ENCODE measurements at regions of chr12 and their contacts with region 1.

Region 1: GRCh38 chr12:51368640-51369517 is 22.3 kb downstream of the GALNT6 start:
- DNase-seq: peak; percentile 94 to 98 (median 96)
- H3K4me3 ChIP-seq: peak overlapping the region; percentile 45 to 55
- H3K4me3 Mint-ChIP-seq: peak overlapping the region; percentile 63 to 92 (median 81)
- H3K27ac ChIP-seq: peak overlapping the region; percentile 54
- H3K27ac Mint-ChIP-seq: peak overlapping the region; percentile 96 to 99 (median 98)
- H3K4me1 ChIP-seq: peaks cover 33% of the 10 kb centered on the region
- H3K4me1 Mint-ChIP-seq: peaks cover 32 to 51% (median 40%) of the 10 kb centered on the region in 4 donors
- H3K27me3 ChIP-seq: no peaks in the 10 kb centered on the region
- H3K27me3 Mint-ChIP-seq: no peaks in the 10 kb centered on the region

Region 2: DNA sequence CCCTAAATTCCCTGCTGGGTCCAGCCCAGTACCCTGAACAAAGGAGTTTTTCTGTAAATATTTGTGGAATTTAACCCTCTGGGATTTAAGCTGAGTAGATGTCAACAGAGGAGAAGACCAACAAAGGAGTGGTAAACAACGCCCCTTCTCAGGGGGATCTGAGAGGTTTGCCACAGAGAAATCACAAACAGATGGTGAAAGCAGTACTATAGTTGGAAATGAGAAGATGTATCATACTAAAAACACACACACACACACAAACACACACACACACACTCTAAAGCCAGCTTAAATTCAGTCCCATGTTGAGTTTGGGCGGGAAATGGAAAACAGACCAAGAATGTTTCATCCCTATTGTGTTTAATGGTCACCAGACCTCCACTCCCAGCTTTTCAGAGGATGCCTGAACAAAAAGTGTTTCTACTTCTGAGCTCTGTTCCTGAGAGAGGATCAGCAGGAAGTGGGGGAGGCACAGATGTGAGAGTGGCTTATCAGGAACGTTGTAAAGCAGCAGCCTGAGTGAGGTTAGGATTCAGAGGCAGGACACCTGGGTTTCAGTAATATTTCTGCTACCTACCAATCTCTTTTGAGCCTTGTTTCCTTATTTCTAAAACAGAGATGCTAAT is 48.1 kb before region 1 on chr12:
- CTCF ChIA-PET with region 1: interaction called, 3 read pairs
- POLR2A ChIA-PET with region 1: interaction called, 27 read pairs
- intact Hi-C with region 1: no loop called
- DNase-seq: peak in 1 of 5 donors; percentile 29
- H3K4me3 ChIP-seq: peak overlapping the region; percentile 61 to 73
- H3K4me3 Mint-ChIP-seq: peak overlapping the region; percentile 82 to 99 (median 96)
- H3K27ac ChIP-seq: peak overlapping the region; percentile 94
- H3K27ac Mint-ChIP-seq: peak overlapping the region; percentile 95 to 98 (median 98)
- H3K4me1 ChIP-seq: peaks cover 78% of the 10 kb centered on the region
- H3K4me1 Mint-ChIP-seq: peaks cover 53 to 93% (median 72%) of the 10 kb centered on the region in 4 donors
- H3K27me3 ChIP-seq: no peaks in the 10 kb centered on the region
- H3K27me3 Mint-ChIP-seq: no peaks in the 10 kb centered on the region

Region 3: GRCh38 chr12:51326762-51327439 is 42.0 kb before region 1 on chr12:
- CTCF ChIA-PET with region 1: no interaction called
- POLR2A ChIA-PET with region 1: interaction called, 27 read pairs
- intact Hi-C with region 1: no loop called
- DNase-seq: no peak
- H3K4me3 ChIP-seq: no peak overlapping the region
- H3K4me3 Mint-ChIP-seq: peak overlapping the region in 7 of 8 donors; percentile 40 to 74 (median 64)
- H3K27ac ChIP-seq: peak overlapping the region; percentile 27
- H3K27ac Mint-ChIP-seq: peak overlapping the region; percentile 77 to 98 (median 94)
- H3K4me1 ChIP-seq: peaks cover 65% of the 10 kb centered on the region
- H3K4me1 Mint-ChIP-seq: peaks cover 51 to 91% (median 71%) of the 10 kb centered on the region in 4 donors
- H3K27me3 ChIP-seq: no peaks in the 10 kb centered on the region
- H3K27me3 Mint-ChIP-seq: no peaks in the 10 kb centered on the region

Region 4: GRCh38 chr12:51351913-51352532 is 16.9 kb before region 1 on chr12:
- CTCF ChIA-PET with region 1: interaction called, 11 read pairs
- POLR2A ChIA-PET with region 1: interaction called, 6 read pairs
- intact Hi-C with region 1: loop called (anchors 2 kb)
- DNase-seq: peak; percentile 49 to 60 (median 50)
- H3K4me3 ChIP-seq: no peak overlapping the region
- H3K4me3 Mint-ChIP-seq: no peak overlapping the region
- H3K27ac ChIP-seq: no peak overlapping the region
- H3K27ac Mint-ChIP-seq: peak overlapping the region in 5 of 7 donors; percentile 5 to 83 (median 28)
- H3K4me1 ChIP-seq: no peaks in the 10 kb centered on the region
- H3K4me1 Mint-ChIP-seq: peaks cover 0 to 12% (median 4%) of the 10 kb centered on the region in 4 donors
- H3K27me3 ChIP-seq: no peaks in the 10 kb centered on the region
- H3K27me3 Mint-ChIP-seq: no peaks in the 10 kb centered on the region

Region 5: DNA sequence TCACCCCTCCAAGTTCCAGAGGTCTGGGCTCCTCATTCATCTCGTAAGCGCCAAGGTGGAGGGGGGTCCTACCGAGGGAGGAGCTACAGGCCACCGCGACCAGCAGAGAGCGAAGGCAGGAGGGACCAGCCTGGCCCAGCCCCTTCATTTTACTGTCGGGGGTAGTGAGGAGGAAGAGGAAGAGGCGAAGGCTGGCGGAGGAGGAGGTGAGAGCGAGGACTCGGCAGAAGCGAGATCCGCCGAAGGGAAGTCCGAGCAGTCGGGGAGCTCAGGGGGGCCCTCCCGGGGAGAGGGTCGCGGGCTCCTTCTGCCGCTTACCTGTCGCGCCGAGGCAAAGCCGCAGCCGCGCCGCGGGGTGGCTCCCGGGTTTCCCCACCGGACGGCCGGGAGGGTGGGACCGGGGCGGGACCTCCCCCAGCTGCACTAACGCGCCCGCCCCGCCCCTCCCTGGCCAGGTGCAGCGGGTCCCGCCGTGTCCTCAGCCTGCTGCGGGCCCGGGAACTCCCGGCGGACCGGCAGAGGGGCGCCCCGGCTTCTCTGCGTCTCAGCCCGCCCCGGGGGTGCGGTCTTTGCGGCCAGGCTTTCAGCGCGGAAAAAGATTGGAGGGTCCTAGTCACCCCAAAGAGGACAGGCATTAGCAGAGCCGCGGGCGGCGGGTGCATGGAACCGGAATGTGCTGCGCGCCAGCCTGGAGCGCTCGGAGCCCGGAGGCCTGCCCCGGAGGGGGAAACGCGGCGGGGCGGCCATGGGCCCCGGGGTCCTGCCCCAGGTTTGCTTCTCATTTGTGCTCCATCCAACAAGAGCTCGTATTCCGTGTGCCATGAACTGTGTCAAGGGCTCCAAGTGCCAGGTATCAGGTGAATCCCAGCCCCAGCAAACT is 22.6 kb after region 1 on chr12 and contains the start of gene GALNT6:
- CTCF ChIA-PET with region 1: interaction called, 7 read pairs
- POLR2A ChIA-PET with region 1: interaction called, 33 read pairs
- intact Hi-C with region 1: loop called (anchors 1 kb)
- DNase-seq: peak; percentile 60 to 79 (median 65)
- H3K4me3 ChIP-seq: peak within 1 kb of the TSS; percentile 25 to 68
- H3K4me3 Mint-ChIP-seq: peak within 1 kb of the TSS; percentile 86 to 97 (median 90)
- H3K27ac ChIP-seq: peak within 1 kb of the TSS; percentile 55
- H3K27ac Mint-ChIP-seq: peak within 1 kb of the TSS; percentile 74 to 97 (median 91)
- H3K4me1 ChIP-seq: peaks cover 74% of the 10 kb centered on the region
- H3K4me1 Mint-ChIP-seq: peaks cover 58 to 80% (median 69%) of the 10 kb centered on the region in 4 donors
- H3K27me3 ChIP-seq: no peaks in the 10 kb centered on the region
- H3K27me3 Mint-ChIP-seq: no peaks in the 10 kb centered on the region
- total RNA-seq, gene GALNT6: 1.7 to 4.9 TPM

Region 6: GRCh38 chr12:51424662-51425438 is 56.0 kb after region 1 on chr12 and contains the start of gene SLC4A8:
- CTCF ChIA-PET with region 1: interaction called, 3 read pairs
- POLR2A ChIA-PET with region 1: interaction called, 3 read pairs
- intact Hi-C with region 1: loop called (anchors 1 kb)
- DNase-seq: peak; percentile 62 to 74 (median 66)
- H3K4me3 ChIP-seq: peak within 1 kb of the TSS; percentile 4 to 51
- H3K4me3 Mint-ChIP-seq: peak within 1 kb of the TSS; percentile 80 to 88 (median 86)
- H3K27ac ChIP-seq: peak within 1 kb of the TSS; percentile 8
- H3K27ac Mint-ChIP-seq: peak within 1 kb of the TSS in 5 of 7 donors; percentile 72 to 88 (median 85)
- H3K4me1 ChIP-seq: peaks cover 6% of the 10 kb centered on the region
- H3K4me1 Mint-ChIP-seq: peaks cover 9 to 10% (median 10%) of the 10 kb centered on the region in 4 donors
- H3K27me3 ChIP-seq: no peaks in the 10 kb centered on the region
- H3K27me3 Mint-ChIP-seq: no peaks in the 10 kb centered on the region
- total RNA-seq, gene SLC4A8: 0.47 to 0.69 TPM

Region 7: DNA sequence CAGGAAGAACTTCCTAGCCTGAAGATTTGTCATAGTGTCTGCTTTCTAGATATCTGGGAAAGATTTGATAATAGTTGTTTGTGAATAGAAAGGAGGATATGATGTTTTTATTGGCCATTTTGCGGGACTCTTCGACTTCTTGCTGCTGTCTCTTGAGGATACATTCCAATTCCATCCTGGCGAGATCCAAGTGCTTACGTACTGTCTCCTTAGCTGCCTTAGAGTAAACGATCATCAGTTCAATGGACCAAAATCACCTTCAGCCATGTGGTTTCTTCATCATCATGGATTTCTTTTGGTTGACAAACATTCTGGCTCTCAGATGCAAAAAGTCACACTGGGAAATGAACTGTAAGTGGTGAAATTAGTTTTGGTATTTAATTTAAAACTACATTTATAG is 139.4 kb after region 1 on chr12:
- CTCF ChIA-PET with region 1: no interaction called
- POLR2A ChIA-PET with region 1: no interaction called
- intact Hi-C with region 1: no loop called
- DNase-seq: no peak
- H3K4me3 ChIP-seq: no peak overlapping the region
- H3K4me3 Mint-ChIP-seq: no peak overlapping the region
- H3K27ac ChIP-seq: no peak overlapping the region
- H3K27ac Mint-ChIP-seq: no peak overlapping the region
- H3K4me1 ChIP-seq: no peaks in the 10 kb centered on the region
- H3K4me1 Mint-ChIP-seq: no peaks in the 10 kb centered on the region
- H3K27me3 ChIP-seq: no peaks in the 10 kb centered on the region
- H3K27me3 Mint-ChIP-seq: no peaks in the 10 kb centered on the region

Region 8: GRCh38 chr12:51531978-51532497 is 163.2 kb after region 1 on chr12:
- CTCF ChIA-PET with region 1: interaction called, 9 read pairs
- POLR2A ChIA-PET with region 1: no interaction called
- intact Hi-C with region 1: loop called (anchors 1 kb)
- DNase-seq: peak; percentile 60 to 70 (median 65)
- H3K4me3 ChIP-seq: no peak overlapping the region
- H3K4me3 Mint-ChIP-seq: no peak overlapping the region
- H3K27ac ChIP-seq: no peak overlapping the region
- H3K27ac Mint-ChIP-seq: peak overlapping the region in 2 of 7 donors; percentile 9 to 27
- H3K4me1 ChIP-seq: no peaks in the 10 kb centered on the region
- H3K4me1 Mint-ChIP-seq: peaks cover 3 to 8% (median 6%) of the 10 kb centered on the region in 4 donors
- H3K27me3 ChIP-seq: no peaks in the 10 kb centered on the region
- H3K27me3 Mint-ChIP-seq: peaks cover 6 to 11% of the 10 kb centered on the region in 2 donors

Measured in CD4-positive, alpha-beta memory T cell (primary cell).